ENCODE measurements at regions of chr3 and their contacts with region 1.

Region 1: GRCh38 chr3:65953301-65953812 is 85.4 kb downstream of the MAGI1 start:
- DNase-seq: no peak
- ATAC-seq: peak; percentile 43
- H3K4me3 ChIP-seq: no peak overlapping the region
- H3K27ac ChIP-seq: peak overlapping the region; percentile 28 to 30
- H3K4me1 ChIP-seq: peaks cover 3 to 16% of the 10 kb centered on the region in 2 donors
- H3K27me3 ChIP-seq: no peaks in the 10 kb centered on the region

Region 2: DNA sequence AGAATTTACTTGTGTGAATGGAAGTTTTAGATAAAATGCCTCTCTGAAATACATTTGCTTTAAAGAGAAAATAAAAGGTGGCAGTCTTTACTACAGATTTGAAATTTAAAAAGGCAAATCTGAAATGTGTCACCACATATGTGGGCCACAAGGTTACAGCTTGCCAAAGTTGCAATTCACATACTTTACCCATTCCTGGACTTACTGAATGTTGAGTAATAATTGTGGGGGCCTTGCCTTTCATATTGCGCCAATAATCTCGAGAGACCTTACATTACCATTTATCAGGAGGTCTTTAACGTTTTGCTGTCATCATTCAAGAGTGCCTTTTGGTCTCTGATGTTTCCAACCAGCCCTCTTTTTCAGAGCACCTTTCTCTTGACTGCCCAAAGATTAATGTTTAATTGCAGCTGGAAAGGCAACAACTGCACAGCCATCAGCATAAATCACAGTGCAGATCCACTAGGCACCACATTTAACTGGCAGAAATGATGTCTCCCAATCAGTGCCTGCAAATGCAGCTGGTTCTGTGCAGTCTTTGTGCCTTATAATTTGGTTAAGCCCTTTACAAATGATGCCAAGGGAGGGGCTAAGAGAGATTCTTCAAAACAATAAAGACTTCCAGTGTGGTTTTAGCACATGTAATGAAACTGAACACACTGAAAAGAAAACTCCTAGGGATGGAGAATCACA is 121.5 kb before region 1 on chr3:
- intact Hi-C with region 1: no loop called
- DNase-seq: no peak
- ATAC-seq: no peak
- H3K4me3 ChIP-seq: no peak overlapping the region
- H3K27ac ChIP-seq: peak overlapping the region in 1 of 2 donors; percentile 44
- H3K4me1 ChIP-seq: peaks cover 3 to 5% of the 10 kb centered on the region in 2 donors
- H3K27me3 ChIP-seq: no peaks in the 10 kb centered on the region

Region 3: GRCh38 chr3:65888980-65889706 is 64.2 kb before region 1 on chr3:
- intact Hi-C with region 1: loop called in 1 of 2 experiments (anchors 5 kb)
- DNase-seq: peak in 1 of 2 donors; percentile 53
- ATAC-seq: peak; percentile 87
- H3K4me3 ChIP-seq: no peak overlapping the region
- H3K27ac ChIP-seq: no peak overlapping the region
- H3K4me1 ChIP-seq: peaks cover 0 to 4% of the 10 kb centered on the region in 2 donors
- H3K27me3 ChIP-seq: no peaks in the 10 kb centered on the region

Measured in aorta (tissue), 5 donors.